Left ventricle myocardium inferior (tissue), 1 donor: ENCODE measurements at regions of chr14 and their contacts with region 1.

Region 1: GRCh38 chr14:32576088-32576795 is 247.1 kb downstream of the AKAP6 start:
- DNase-seq: no peak
- H3K4me3 ChIP-seq: peak overlapping the region; percentile 36
- H3K27ac ChIP-seq: peak overlapping the region; percentile 9
- H3K4me1 ChIP-seq: peaks cover 53% of the 10 kb centered on the region
- H3K27me3 ChIP-seq: no peaks in the 10 kb centered on the region
- CTCF ChIP-seq: peak; percentile 97

Region 2: GRCh38 chr14:32826404-32827082 is 250.3 kb after region 1 on chr14:
- intact Hi-C with region 1: loop called (anchors 5 kb)
- DNase-seq: no peak
- H3K4me3 ChIP-seq: no peak overlapping the region
- H3K27ac ChIP-seq: peak overlapping the region; percentile 52
- H3K4me1 ChIP-seq: peaks cover 65% of the 10 kb centered on the region
- H3K27me3 ChIP-seq: no peaks in the 10 kb centered on the region
- CTCF ChIP-seq: peak; percentile 35

Region 3: GRCh38 chr14:33792720-33793368 is 1216.6 kb after region 1 on chr14:
- intact Hi-C with region 1: loop called (anchors 5 kb)
- DNase-seq: peak; percentile 81
- H3K4me3 ChIP-seq: peak overlapping the region; percentile 52
- H3K27ac ChIP-seq: peak overlapping the region; percentile 26
- H3K4me1 ChIP-seq: peaks cover 11% of the 10 kb centered on the region
- H3K27me3 ChIP-seq: no peaks in the 10 kb centered on the region
- CTCF ChIP-seq: peak; percentile 94